ENCODE measurements at regions of chr16 and their contacts with region 1.

Region 1: DNA sequence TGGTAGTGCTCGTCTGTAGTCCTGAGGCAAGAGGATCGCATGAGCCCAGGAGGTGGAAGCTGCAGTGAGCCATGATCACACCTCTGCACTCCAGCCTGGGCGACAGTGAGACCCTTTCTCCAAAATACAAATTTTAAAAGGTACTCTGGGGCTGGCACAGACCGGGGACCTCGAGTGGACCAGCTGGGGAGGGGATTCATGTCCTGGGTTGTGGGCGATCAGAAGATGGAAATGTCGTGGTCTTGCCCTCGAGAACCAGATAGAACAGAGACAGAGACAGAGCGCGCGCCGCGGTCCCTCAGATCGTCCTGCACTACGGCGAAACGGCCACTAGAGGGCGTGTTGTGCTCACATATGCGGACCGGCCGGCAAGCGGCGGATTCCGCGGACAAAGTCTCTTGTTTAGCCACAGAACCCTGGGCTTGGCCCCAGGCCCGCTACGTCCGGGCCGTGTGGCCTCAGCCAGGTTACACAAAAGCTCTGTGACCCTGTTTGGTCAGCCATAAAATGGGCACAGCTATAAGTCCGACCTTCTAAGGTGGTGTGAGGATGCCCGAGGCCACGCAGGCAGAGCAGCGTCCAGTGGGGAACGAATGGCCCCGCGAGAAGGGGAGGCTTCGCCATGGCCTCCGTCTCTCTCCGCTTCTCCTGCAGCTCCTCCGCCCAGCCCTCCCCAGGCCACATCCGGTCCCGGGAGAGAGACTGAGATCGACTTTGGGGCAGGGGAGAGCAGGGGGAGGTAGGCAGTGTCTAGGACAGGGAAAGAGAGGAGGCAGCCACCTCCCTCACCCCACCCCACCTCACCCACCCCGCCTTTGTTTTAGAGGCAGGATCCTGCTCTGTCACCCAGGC is 14.6 kb upstream of the SBK1 start:
- DNase-seq: peak; percentile 57 to 88
- H3K4me3 ChIP-seq: peak overlapping the region; percentile 55; the same call in 1 of the 2 replicates
- H3K27ac ChIP-seq: no peak overlapping the region
- H3K4me1 ChIP-seq: no peaks in the 10 kb centered on the region
- H3K27me3 ChIP-seq: peaks cover 45% of the 10 kb centered on the region
- CTCF ChIP-seq: peak; percentile 98

Region 2: GRCh38 chr16:28166394-28167208 is 111.2 kb before region 1 on chr16:
- CTCF ChIA-PET with region 1: no interaction called
- POLR2A ChIA-PET with region 1: interaction called, 4 read pairs
- intact Hi-C with region 1: loop called (anchors 1 kb)
- DNase-seq: peak; percentile 72 to 97
- H3K4me3 ChIP-seq: peak overlapping the region; percentile 19; the same call in 1 of the 2 replicates
- H3K27ac ChIP-seq: peak overlapping the region; percentile 86
- H3K4me1 ChIP-seq: peaks cover 53% of the 10 kb centered on the region
- H3K27me3 ChIP-seq: no peaks in the 10 kb centered on the region
- CTCF ChIP-seq: no peak

Region 3: DNA sequence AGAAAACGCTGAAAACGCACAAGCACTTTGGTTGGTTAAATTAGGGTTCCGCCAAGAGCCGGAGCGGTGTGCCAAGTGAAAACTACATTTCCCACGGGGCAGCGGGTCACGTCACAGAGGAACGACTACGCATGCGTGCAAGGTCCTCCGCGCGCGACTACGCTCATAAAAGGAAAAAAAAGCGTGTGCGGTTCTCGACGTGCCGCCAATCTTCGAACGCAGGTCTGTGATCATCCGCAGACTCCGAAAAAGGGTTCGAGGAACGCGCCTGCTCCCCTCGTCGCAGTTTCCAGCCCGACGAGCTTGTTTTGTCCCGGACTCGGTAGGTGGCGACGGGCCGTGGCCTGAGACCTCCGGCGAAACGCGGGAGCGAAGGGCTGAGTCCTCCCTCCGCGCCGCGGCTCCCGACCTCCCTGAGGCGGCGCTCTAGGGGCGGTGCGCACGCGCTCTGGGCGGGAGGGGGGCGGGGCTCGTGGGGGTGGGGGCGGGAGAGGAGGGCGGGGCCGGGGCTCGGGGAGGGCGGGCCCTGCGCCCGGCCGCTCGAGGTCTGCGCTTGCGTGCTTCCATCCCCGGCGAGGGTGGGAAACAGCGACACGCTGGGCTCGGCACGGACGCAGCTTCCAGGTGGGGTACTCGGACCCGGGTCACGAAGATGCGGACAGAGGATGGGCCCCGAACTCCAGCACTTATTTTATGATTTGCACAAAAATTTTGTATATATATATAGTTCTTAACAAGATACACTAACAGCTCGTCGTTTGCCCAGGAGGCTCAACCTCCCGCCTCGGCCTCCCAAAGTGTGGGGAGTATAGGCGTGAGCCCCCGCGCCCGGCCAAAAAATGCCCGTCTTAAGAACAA is 276.2 kb after region 1 on chr16 and contains the start of gene SGF29:
- CTCF ChIA-PET with region 1: interaction called, 3 read pairs
- POLR2A ChIA-PET with region 1: no interaction called
- intact Hi-C with region 1: loop called (anchors 1 kb)
- DNase-seq: peak; percentile 72 to 94
- H3K4me3 ChIP-seq: peak within 1 kb of the TSS; percentile 74
- H3K27ac ChIP-seq: peak within 1 kb of the TSS; percentile 93
- H3K4me1 ChIP-seq: peaks cover 16% of the 10 kb centered on the region
- H3K27me3 ChIP-seq: no peaks in the 10 kb centered on the region
- CTCF ChIP-seq: peak; percentile 36; the same call in 1 of the 2 replicates
- total RNA-seq, gene SGF29: 45.3 and 51.1 TPM in 2 replicates

Region 4: GRCh38 chr16:28609631-28610594 is 332.1 kb after region 1 on chr16 and contains the start of gene SULT1A1:
- CTCF ChIA-PET with region 1: interaction called, 11 read pairs
- POLR2A ChIA-PET with region 1: no interaction called
- intact Hi-C with region 1: loop called (anchors 5 kb)
- DNase-seq: peak; percentile 85 to 98
- H3K4me3 ChIP-seq: peak within 1 kb of the TSS; percentile 26; the same call in 1 of the 2 replicates
- H3K27ac ChIP-seq: peak within 1 kb of the TSS; percentile 69
- H3K4me1 ChIP-seq: peaks cover 25% of the 10 kb centered on the region
- H3K27me3 ChIP-seq: no peaks in the 10 kb centered on the region
- CTCF ChIP-seq: no peak
- total RNA-seq, gene SULT1A1: 82.0 and 98.8 TPM in 2 replicates

Region 5: GRCh38 chr16:28943281-28943680 is 665.5 kb after region 1 on chr16:
- CTCF ChIA-PET with region 1: no interaction called
- POLR2A ChIA-PET with region 1: no interaction called
- intact Hi-C with region 1: loop called (anchors 5 kb)
- DNase-seq: no peak
- H3K4me3 ChIP-seq: no peak overlapping the region
- H3K27ac ChIP-seq: no peak overlapping the region
- H3K4me1 ChIP-seq: peaks cover 12% of the 10 kb centered on the region
- H3K27me3 ChIP-seq: no peaks in the 10 kb centered on the region
- CTCF ChIP-seq: no peak

Measured in PC-9 (cell line).